GM12878 (cell line): ENCODE measurements at regions of chrX and their contacts with region 1.

Region 1: DNA sequence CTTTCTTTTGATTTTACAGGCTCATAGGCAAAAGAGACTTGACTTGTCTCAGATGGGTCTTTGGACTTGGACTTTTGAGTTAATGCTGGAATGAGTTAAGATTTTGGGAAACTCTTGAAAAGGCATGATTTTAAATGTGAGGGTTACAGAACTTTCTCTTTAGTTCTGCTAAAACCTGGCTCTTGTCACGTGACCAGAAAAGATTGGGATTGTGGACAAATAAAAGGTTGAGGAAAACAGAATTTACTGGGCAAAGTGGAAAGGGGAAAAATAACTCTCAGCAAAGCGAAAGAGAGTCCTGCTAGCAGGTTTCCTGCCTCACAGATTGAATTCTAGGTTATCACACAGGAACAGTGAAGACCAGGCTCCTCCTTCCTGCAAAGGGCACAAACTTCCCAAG is 114.0 kb downstream of the SPANXN4 start:
- DNase-seq: no peak
- ATAC-seq: no peak
- H3K4me3 ChIP-seq: no peak overlapping the region
- H3K27ac ChIP-seq: no peak overlapping the region
- H3K4me1 ChIP-seq: no peaks in the 10 kb centered on the region
- H3K27me3 ChIP-seq: no peaks in the 10 kb centered on the region
- CTCF ChIP-seq: no peak
- EP300 ChIP-seq: no peak
- POLR2A ChIP-seq: no peak
- RAD21 ChIP-seq: no peak

Region 2: GRCh38 chrX:143121468-143121867 is 18.2 kb before region 1 on chrX:
- CTCF ChIA-PET with region 1: no interaction called
- POLR2A ChIA-PET with region 1: no interaction called
- RAD21 ChIA-PET with region 1: no interaction called
- SMC1A ChIA-PET with region 1: no interaction called
- in situ Hi-C with region 1: no loop called
- intact Hi-C with region 1: loop called (anchors 1 kb)
- DNase-seq: no peak
- ATAC-seq: no peak
- H3K4me3 ChIP-seq: no peak overlapping the region
- H3K27ac ChIP-seq: no peak overlapping the region
- H3K4me1 ChIP-seq: no peaks in the 10 kb centered on the region
- H3K27me3 ChIP-seq: no peaks in the 10 kb centered on the region
- CTCF ChIP-seq: no peak
- EP300 ChIP-seq: no peak
- POLR2A ChIP-seq: no peak
- RAD21 ChIP-seq: no peak